Esophagus muscularis mucosa (tissue), 4 donors: ENCODE measurements at regions of chr14 and their contacts with region 1.

Region 1: GRCh38 chr14:32513571-32514009 is 184.5 kb downstream of the AKAP6 start:
- DNase-seq: no peak
- H3K4me3 ChIP-seq: no peak overlapping the region
- H3K27ac ChIP-seq: peak overlapping the region in 3 of 4 donors; percentile 19 to 43 (median 34)
- H3K4me1 ChIP-seq: peaks cover 17 to 55% (median 51%) of the 10 kb centered on the region in 4 donors
- H3K27me3 ChIP-seq: no peaks in the 10 kb centered on the region
- CTCF ChIP-seq: peak; percentile 29 to 68 (median 64)
- EP300 ChIP-seq: no peak
- POLR2A ChIP-seq: no peak

Region 2: DNA sequence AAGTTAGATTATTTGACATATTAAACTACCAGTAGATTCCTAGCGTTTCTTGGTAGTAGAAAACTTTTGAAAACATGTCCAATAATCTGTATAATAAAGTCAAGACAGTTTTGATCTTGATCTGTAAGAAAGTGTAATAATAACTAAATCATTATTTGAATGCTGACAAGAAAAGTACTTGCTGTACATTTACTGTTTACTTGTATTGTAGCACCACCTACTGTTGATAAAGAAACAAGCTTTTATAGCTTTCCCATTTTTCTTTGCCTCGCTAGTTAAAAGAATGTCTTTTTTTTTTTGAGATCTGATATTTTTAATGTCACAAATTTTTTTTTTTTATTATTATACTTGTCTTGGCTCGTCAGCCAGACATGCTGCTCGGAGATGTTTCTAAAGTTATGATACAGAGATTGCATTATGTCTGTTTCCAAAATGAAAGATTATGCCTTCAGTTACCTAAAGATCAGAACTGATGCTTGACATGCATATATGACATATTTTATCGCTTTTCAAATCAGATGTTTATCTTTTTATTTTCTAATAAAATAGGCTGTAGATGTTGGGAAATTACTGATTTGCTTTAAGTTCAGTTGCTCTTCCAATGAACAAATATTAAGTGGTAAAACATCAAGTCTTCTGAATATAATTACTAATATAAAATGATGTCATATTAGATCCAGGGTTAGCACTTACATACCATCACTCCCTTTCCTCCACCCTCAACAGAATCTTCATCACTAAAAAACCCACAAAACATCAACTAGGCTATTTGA is 44.0 kb before region 1 on chr14:
- intact Hi-C with region 1: loop called (anchors 2 kb)
- DNase-seq: no peak
- H3K4me3 ChIP-seq: no peak overlapping the region
- H3K27ac ChIP-seq: peak overlapping the region; percentile 73 to 84 (median 77)
- H3K4me1 ChIP-seq: peaks cover 41 to 68% (median 63%) of the 10 kb centered on the region in 4 donors
- H3K27me3 ChIP-seq: no peaks in the 10 kb centered on the region
- CTCF ChIP-seq: peak; percentile 50 to 65 (median 61)
- EP300 ChIP-seq: no peak
- POLR2A ChIP-seq: no peak

Region 3: GRCh38 chr14:32757568-32757967 is 244.0 kb after region 1 on chr14:
- intact Hi-C with region 1: no loop called
- DNase-seq: no peak
- H3K4me3 ChIP-seq: no peak overlapping the region
- H3K27ac ChIP-seq: no peak overlapping the region
- H3K4me1 ChIP-seq: peaks cover 0 to 16% (median 0%) of the 10 kb centered on the region in 4 donors
- H3K27me3 ChIP-seq: no peaks in the 10 kb centered on the region
- CTCF ChIP-seq: no peak
- EP300 ChIP-seq: no peak
- POLR2A ChIP-seq: no peak